Sciatic nerve (tissue), 2 donors: ENCODE measurements at regions of chr1 and their contacts with region 1.

Region 1: DNA sequence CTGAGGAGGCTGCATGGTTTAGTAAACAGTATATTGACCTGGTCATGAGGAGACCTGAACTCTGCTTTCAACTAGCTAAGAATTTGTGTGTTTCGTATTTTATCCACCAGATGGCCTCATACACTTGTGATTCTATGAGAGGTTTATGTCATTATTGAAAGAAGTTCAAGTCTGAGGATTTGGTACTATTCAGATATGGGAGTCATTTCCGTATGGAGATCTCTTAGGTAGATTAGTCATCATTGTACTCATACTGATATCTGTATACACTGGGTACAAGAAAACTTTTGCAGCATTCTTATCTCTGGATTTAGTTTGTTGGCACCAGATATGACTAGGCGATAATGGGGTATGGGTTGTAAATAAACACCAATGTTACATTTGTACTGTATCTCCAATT is 26.6 kb downstream of the ATF6 start:
- DNase-seq: no peak
- ATAC-seq: peak; percentile 75

Region 2: GRCh38 chr1:162035241-162035640 is 242.5 kb after region 1 on chr1:
- intact Hi-C with region 1: loop called (anchors 5 kb)
- DNase-seq: no peak
- ATAC-seq: no peak